AG04449 (cell line): ENCODE measurements at regions of chr17 and their contacts with region 1.

Region 1: DNA sequence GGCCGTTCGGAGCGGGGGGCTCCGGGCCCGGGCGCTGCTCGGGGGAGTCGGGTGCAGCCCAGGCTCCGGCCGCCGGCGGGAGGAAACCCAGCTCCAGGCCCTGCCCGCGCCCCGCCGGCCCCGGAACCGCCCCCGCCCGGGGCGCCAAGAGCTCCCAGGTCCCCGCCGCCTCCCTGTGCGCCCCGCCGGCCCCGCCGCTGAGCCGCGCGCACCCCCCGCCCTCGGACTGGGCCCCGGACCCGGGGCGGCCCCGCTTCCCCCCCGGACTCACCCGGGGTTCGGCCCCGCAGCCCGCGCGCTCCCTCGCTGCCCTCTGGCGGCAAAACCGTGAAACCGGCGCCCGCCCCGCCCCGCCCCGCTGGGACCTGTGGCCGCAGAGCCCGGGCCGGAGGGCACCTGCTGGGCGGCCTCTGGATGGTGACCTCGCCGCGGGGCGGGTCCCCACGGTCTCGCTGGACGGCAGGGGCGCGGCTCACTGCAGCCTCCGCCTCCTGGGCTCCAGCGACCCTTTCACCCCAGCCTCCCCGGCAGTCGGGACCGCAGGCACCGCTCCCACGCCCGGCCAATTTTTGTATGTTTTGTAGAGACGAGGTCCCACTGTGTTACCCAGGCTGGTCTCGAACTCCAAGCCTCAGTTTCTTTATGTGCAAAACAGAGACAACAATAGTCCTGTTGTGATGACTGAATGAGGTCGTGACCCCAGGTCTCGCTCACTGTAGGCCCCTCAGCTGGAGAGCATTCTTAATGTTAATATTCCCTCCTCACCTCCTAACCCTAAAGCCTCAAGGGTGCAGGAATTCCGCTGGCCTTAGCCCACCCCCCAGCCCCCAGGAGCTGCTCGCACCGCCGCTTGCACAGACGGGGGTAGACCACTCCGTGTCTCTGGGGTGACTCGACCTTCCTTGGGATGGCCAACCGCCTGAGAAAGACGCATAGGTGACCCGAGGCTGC is 33.6 kb upstream of the RPH3AL start:
- DNase-seq: no peak
- H3K4me3 ChIP-seq: peak overlapping the region; percentile 52
- CTCF ChIP-seq: peak; percentile 78

Region 2: DNA sequence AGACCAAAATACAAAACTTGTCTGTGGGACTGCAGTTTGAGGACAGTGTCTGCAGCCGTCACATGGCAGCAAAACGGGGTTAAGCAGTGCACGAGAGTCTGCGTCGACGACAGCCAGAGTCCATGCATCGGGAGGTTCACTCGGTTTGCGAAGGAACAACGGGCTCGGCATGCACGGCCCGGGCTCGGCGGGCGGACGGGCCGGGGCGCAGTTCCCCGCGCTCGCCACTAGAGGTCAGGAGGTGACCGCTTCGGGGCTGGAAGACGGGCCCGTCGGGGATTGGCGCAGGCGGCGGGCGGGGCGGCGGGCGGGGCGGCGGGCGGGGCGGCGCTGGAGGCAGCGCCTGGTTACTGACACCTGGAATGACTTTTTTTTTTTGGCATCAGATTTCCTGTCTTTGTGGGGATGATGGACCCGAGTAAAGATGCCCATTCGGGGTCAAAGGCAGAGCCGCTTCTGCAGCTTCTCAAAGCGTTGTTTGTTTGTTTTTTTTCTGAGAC is 242.4 kb before region 1 on chr17:
- CTCF ChIA-PET with region 1: interaction called, 20 read pairs
- POLR2A ChIA-PET with region 1: no interaction called
- DNase-seq: no peak
- H3K4me3 ChIP-seq: no peak overlapping the region
- CTCF ChIP-seq: peak; percentile 88

Region 3: GRCh38 chr17:164303-165235 is 221.6 kb before region 1 on chr17:
- CTCF ChIA-PET with region 1: interaction called, 48 read pairs
- POLR2A ChIA-PET with region 1: no interaction called
- DNase-seq: no peak
- H3K4me3 ChIP-seq: no peak overlapping the region
- CTCF ChIP-seq: peak; percentile 70

Region 4: DNA sequence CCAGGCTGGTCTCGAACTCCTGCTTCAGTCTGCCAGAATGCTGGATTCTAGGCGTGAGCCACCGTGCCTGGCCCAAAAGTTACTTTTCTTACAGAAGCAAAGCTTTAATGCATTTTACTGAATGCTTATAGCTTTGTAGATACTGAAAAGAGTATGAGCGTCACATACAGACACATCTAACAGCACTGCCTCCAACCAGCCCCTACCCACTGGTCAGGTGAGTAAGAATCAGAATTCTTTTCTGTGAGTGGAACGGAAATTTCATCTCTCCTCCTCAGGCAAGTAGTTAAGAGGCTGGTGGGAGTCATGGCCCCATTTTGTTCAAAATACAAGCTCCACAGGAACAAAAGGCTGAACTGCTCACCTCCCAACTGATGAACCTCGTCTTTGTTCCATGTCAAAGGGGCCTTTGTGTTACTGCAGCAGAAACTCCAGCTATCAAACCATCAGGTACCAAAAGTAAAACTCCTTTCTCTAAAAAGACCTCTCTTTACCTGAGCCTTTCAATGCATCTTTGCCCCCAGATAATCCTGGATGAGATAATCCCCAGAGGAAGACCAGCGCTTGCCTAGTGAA is 58.8 kb after region 1 on chr17:
- CTCF ChIA-PET with region 1: no interaction called
- POLR2A ChIA-PET with region 1: no interaction called
- DNase-seq: no peak
- H3K4me3 ChIP-seq: no peak overlapping the region
- CTCF ChIP-seq: no peak